ENCODE measurements at regions of chr7 and their contacts with region 1.

Region 1: DNA sequence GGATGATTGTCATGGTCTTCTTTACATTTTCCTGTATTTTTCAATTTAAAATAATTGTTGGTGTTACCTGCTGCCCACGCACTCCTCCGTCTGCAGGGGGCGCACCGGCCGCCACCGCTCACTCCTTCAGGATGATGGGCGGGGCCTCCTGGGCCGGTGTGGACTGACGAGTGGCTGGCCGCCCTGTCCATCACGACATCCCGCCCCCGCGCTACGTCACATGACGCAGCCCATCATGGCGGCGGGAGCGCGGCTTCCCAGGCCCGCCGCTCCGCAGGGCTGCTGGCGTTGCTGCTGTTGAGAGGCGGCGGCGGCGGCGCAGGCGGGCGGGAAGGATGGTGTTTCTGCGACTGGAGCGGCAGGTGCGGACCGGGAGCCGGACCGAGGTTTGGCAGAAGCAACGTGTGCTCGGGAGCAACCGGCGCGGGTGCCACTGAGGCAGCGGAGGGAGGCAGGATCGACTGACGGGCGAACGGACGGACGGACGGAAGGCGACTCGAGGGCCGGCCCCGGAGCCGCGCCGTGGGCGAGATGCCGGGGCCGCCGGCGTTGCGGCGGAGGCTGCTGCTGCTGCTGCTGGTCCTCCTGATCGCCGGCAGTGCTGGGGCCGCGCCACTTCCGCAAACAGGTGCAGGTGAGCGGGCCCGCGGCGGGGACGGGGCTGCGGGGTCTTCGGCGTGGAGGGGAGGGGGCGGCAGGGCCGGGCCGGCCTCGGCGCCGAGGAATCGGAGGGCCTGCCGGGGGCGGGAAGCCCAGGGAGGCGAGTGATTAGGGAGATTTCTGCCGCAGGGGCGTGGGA is at the start of gene LMTK2:
- DNase-seq: peak; percentile 93
- H3K4me3 ChIP-seq: peak within 1 kb of the TSS; percentile 92
- H3K27ac ChIP-seq: peak within 1 kb of the TSS; percentile 86
- H3K4me1 ChIP-seq: peaks cover 4% of the 10 kb centered on the region
- H3K27me3 ChIP-seq: no peaks in the 10 kb centered on the region
- CTCF ChIP-seq: peak; percentile 97
- total RNA-seq, gene LMTK2: 20.6 TPM in 2 replicates

Region 2: DNA sequence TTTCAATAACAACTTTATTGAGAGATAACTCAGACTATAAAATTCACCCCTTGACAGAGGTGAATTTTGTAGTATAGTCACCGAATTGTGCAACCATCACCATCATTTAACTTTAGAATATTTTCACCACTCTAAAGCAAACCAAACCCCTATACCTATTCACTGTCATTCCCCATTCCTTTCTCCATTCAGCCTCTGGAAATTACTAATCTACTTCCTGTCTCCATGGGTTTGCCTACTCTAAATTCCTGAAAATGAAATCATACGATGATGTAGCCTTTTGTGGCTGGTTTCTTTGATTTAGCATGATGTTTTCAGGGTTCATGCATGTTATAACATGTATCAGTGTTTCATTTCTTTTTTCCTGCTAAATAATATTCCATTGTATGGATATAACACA is 15.8 kb before region 1 on chr7:
- CTCF ChIA-PET with region 1: no interaction called
- POLR2A ChIA-PET with region 1: interaction called, 34 read pairs
- intact Hi-C with region 1: no loop called
- DNase-seq: no peak
- H3K4me3 ChIP-seq: no peak overlapping the region
- H3K27ac ChIP-seq: no peak overlapping the region
- H3K4me1 ChIP-seq: no peaks in the 10 kb centered on the region
- H3K27me3 ChIP-seq: no peaks in the 10 kb centered on the region
- CTCF ChIP-seq: no peak

Region 3: DNA sequence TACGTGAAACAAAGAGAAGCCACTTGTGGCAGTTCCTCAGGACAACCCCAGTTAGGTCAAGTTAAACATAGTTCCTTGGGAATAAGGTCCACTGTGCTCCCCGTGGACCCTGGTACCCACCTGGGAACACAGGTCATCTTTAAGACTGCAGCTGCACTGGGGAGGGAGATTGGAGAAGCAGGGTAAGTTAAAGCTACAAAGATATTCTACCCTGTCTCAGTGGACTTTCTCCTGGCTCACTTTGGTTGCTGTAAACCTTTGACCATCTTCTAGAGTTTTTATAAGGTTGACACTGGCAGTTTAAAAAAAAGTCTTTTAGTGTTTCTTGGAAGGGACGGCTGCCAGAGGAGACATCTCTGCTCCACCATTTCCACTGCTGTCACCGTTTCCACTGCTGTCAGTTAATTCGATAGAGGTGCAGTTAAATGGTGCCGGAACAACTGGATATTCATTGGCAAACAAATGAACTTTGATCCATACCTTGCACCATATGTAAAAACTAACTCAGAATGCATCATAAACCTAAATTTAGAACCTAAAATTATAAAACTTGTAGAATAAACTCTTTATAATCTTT is 42.4 kb after region 1 on chr7:
- CTCF ChIA-PET with region 1: no interaction called
- POLR2A ChIA-PET with region 1: no interaction called
- intact Hi-C with region 1: no loop called
- DNase-seq: no peak
- H3K4me3 ChIP-seq: no peak overlapping the region
- H3K27ac ChIP-seq: no peak overlapping the region
- H3K4me1 ChIP-seq: no peaks in the 10 kb centered on the region
- H3K27me3 ChIP-seq: no peaks in the 10 kb centered on the region
- CTCF ChIP-seq: no peak

Region 4: DNA sequence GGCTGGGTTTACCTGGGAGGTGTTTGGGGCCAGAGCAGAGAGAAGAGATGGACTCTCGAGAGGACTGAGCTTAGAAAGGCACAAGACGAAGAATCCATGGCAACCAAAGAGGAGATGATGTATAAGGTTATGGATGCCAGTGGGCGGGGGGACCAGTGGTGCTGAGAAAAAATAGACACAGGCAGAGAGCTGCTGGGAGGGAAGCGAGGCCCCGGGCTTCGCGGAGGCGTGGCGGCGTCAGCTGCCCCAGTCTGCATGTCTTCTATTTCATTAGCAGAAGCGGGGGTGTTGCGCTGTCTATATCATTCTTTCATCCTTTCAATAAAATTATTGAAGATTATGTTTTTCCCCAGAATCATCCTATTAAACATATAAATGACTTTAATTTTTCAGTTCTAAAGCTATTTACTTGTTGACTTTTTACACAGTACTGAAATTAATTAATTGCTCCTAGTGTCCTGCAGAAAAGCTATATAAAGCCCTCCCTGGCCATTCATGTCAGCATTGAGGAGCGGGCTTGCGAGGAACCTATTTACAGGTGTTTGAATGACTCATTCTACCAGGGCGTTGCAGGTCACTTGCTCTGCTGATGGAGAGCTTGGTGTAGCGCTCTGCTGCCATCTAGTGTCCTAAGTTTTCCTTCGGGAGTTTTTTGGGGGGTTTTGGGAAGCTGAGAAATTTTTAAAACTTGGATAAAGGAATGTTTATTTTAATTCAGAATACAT is 61.5 kb after region 1 on chr7:
- CTCF ChIA-PET with region 1: interaction called, 6 read pairs
- POLR2A ChIA-PET with region 1: no interaction called
- intact Hi-C with region 1: loop called (anchors 1 kb)
- DNase-seq: peak; percentile 52
- H3K4me3 ChIP-seq: no peak overlapping the region
- H3K27ac ChIP-seq: no peak overlapping the region
- H3K4me1 ChIP-seq: no peaks in the 10 kb centered on the region
- H3K27me3 ChIP-seq: no peaks in the 10 kb centered on the region
- CTCF ChIP-seq: peak; percentile 84

Region 5: GRCh38 chr7:98186452-98187137 is 79.7 kb after region 1 on chr7:
- CTCF ChIA-PET with region 1: no interaction called
- POLR2A ChIA-PET with region 1: no interaction called
- intact Hi-C with region 1: no loop called
- DNase-seq: no peak
- H3K4me3 ChIP-seq: no peak overlapping the region
- H3K27ac ChIP-seq: no peak overlapping the region
- H3K4me1 ChIP-seq: no peaks in the 10 kb centered on the region
- H3K27me3 ChIP-seq: no peaks in the 10 kb centered on the region
- CTCF ChIP-seq: no peak